ENCODE measurements at regions of chr5 and their contacts with region 1.

Region 1: DNA sequence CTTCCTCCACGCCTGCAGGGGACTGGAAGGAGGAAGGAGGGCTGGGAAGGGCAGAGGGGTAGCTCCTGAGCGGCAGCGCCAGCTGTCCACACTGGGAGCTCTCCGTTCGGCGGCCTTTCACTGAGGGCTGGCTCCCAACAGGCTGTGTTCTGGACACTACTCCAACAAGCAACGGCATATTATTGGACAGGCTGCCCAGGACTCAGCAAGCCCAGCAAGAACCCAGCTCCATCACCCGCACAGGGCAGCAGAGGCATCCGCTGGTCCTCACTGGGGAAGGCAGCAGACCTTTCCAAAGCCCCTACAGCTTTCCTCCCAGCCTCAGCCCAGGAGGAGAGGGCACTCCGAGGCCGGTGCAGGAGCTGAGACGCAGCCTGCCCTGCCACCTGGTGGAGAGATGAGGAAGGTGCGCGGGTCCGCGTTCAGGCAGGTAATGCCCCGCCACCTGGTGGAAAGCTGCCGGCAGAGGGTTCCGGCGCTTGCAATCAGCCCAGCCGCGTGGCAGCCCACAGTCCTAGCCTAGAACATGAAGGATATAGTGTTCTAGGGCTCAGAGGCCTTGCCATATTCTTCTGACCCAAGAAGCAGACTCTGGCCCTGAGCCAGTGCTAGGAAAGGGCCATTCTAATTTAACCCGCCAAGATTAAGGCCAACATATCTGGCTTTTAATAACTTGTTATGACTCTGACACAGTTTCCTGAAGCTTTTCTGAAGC is 74.4 kb downstream of the NRG2 start:
- DNase-seq: peak; percentile 95
- H3K4me3 Mint-ChIP-seq: no peak overlapping the region
- H3K27ac Mint-ChIP-seq: no peak overlapping the region
- H3K4me1 Mint-ChIP-seq: no peaks in the 10 kb centered on the region
- H3K27me3 Mint-ChIP-seq: peaks cover 12% of the 10 kb centered on the region

Region 2: DNA sequence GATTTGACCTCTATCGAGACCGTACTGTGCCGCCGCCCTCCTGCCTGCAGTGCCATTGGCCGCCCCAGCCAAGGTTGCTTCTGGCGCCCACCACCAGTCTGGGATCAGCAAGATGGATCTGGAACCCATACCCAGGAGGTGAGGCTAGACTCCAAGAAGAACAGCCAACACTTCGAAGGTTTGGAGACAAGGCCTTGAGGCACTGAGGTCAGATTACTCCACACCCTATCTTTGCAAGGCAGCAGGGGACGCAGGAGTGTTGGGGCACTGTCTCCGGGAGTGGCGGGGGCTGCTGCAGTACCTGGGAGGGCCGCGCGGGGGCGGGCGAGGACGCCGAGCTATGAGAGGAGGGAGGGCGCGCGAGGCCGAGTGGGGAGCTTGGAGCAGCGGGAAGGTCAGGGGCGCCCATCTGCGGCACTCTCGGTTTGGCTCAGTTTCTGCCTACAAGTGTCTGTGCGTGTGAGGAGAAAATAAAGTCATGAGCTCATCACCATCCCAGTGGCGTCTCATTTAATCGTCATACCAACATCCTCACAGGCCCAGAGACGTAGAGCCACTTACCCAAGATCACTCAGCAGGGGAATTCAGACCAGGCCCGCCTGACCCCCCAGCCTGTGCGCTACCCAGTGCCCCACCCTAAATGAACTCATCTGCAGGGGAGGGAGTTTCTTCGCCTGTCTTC is 193.6 kb before region 1 on chr5:
- CTCF ChIA-PET with region 1: interaction called, 35 read pairs
- intact Hi-C with region 1: no loop called
- DNase-seq: peak; percentile 84
- H3K4me3 Mint-ChIP-seq: peak overlapping the region; percentile 14
- H3K27ac Mint-ChIP-seq: no peak overlapping the region
- H3K4me1 Mint-ChIP-seq: peaks cover 8% of the 10 kb centered on the region
- H3K27me3 Mint-ChIP-seq: no peaks in the 10 kb centered on the region

Region 3: GRCh38 chr5:139844472-139845145 is 124.1 kb before region 1 on chr5:
- CTCF ChIA-PET with region 1: interaction called, 13 read pairs
- intact Hi-C with region 1: loop called (anchors 2 kb)
- DNase-seq: peak; percentile 90
- H3K4me3 Mint-ChIP-seq: no peak overlapping the region
- H3K27ac Mint-ChIP-seq: no peak overlapping the region
- H3K4me1 Mint-ChIP-seq: peaks cover 5% of the 10 kb centered on the region
- H3K27me3 Mint-ChIP-seq: peaks cover 16% of the 10 kb centered on the region

Region 4: GRCh38 chr5:139911425-139912120 is 57.1 kb before region 1 on chr5:
- CTCF ChIA-PET with region 1: interaction called, 24 read pairs
- intact Hi-C with region 1: no loop called
- DNase-seq: no peak
- H3K4me3 Mint-ChIP-seq: no peak overlapping the region
- H3K27ac Mint-ChIP-seq: no peak overlapping the region
- H3K4me1 Mint-ChIP-seq: no peaks in the 10 kb centered on the region
- H3K27me3 Mint-ChIP-seq: peaks cover 8% of the 10 kb centered on the region

Region 5: DNA sequence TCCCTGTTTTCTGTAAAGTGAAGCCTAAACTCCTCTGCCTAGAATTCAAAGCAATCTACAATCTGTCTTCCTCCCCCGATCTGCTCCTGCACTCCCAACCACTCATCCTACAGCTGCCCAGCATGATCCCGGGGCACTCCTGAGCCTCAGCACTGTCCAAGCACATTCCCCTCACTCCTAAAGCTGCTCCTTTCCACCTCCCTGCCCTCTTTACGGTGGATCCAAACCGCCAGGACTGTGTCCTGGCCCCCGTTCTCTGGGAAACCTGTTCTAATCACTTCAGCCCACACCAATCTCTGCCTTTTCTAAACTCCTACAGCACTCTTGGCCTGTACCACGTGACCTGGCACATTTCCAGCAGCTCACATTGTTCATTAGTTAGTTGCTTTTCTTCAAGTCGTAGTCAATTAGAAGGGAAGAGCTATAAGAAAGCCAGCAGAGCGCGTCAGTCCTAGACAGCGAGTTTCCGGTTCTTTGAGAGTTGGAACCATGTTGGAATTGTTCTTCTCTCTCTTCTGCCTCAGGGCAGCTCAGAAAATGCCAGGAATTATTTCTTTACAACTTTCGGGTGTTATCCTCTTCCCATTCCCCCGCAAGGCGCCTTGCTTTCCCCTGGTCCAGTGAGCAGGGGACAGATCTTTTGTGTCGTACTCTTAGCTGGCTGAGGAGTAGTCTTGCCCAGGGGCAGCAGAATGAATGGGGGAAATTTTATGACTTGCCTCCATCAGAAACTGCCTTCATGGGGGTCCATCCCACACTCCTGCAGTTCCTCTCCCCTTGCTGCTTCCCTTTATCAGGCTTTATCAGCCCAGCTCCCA is 13.7 kb after region 1 on chr5:
- CTCF ChIA-PET with region 1: interaction called, 46 read pairs
- intact Hi-C with region 1: no loop called
- DNase-seq: no peak
- H3K4me3 Mint-ChIP-seq: no peak overlapping the region
- H3K27ac Mint-ChIP-seq: no peak overlapping the region
- H3K4me1 Mint-ChIP-seq: peaks cover 2% of the 10 kb centered on the region
- H3K27me3 Mint-ChIP-seq: peaks cover 14% of the 10 kb centered on the region

Region 6: DNA sequence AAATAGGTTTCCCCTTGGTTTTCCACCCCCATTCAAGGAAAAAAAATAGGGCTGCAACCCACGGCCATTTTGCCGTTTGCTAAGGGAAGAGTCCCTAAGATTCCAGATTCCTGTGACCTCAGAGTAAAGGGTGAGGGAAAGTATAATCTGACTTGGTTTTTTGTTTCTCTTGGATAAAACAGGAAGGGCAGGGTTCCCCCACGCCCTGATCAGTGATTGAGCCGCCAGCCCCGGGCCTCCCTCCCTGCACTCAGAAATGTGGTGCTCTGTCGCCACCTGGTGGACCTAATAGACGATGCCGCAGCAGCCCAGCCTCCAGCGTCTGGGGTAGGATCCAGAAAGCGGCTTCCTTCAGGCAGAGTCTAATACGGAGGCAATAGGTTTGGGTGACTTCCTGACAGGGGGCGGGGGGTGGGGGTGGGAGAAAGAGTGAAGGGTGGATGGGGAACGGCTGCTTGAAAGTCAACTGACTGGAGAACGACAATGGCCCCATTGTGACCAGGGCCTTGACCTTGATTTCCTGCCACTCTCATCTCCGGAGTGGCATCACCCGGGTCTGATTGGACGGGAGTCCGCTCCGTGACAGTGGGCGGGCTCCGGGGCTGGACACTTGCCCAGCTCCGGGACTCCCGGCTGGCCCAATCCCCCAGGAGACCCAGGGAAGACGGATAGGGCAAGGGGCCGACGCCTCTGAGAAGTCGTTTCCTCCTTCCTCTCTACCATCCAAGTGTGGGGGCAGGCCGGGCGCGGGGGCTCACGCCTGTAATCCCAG is 188.5 kb after region 1 on chr5:
- CTCF ChIA-PET with region 1: interaction called, 9 read pairs
- intact Hi-C with region 1: loop called (anchors 1 kb)
- DNase-seq: peak; percentile 94
- H3K4me3 Mint-ChIP-seq: peak overlapping the region; percentile 42
- H3K27ac Mint-ChIP-seq: no peak overlapping the region
- H3K4me1 Mint-ChIP-seq: peaks cover 4% of the 10 kb centered on the region
- H3K27me3 Mint-ChIP-seq: no peaks in the 10 kb centered on the region

Measured in activated naive CD4-positive, alpha-beta T cell treated with anti-CD3 and anti-CD28 coated beads for 36 hours (primary cell).